Mucosa of descending colon (tissue), 3 donors: ENCODE measurements at regions of chrX and their contacts with region 1.

Region 1: GRCh38 chrX:39162322-39162735 is 361.1 kb downstream of the MID1IP1 start:
- DNase-seq: peak; percentile 53 to 76 (median 73)
- ATAC-seq: peak; percentile 82
- H3K4me3 ChIP-seq: no peak overlapping the region
- H3K4me1 ChIP-seq: peaks cover 6% of the 10 kb centered on the region
- CTCF ChIP-seq: no peak

Region 2: GRCh38 chrX:39242187-39242586 is 79.9 kb after region 1 on chrX:
- intact Hi-C with region 1: loop called in 1 of 2 experiments (anchors 5 kb)
- DNase-seq: peak in 1 of 3 donors; percentile 71
- ATAC-seq: peak; percentile 92
- H3K4me3 ChIP-seq: no peak overlapping the region
- H3K4me1 ChIP-seq: no peaks in the 10 kb centered on the region
- CTCF ChIP-seq: no peak